ENCODE measurements at regions of chr3 and their contacts with region 1.

Region 1: GRCh38 chr3:50321336-50322114 is 1.0 kb downstream of the HYAL2 start:
- DNase-seq: peak; percentile 75 to 93
- H3K4me3 ChIP-seq: peak overlapping the region; percentile 89 to 96 (median 94)
- H3K27ac ChIP-seq: peak overlapping the region; percentile 100
- H3K4me1 ChIP-seq: peaks cover 0 to 35% (median 19%) of the 10 kb centered on the region in 4 experiments; a peak in 6 of 7 replicates
- H3K27me3 ChIP-seq: no peaks in the 10 kb centered on the region
- CTCF ChIP-seq: peak in 2 of 3 experiments; percentile 69 to 71; a peak in 3 of 4 replicates
- EP300 ChIP-seq: peak in 1 of 2 experiments; percentile 97; a peak in 2 of 3 replicates
- POLR2A ChIP-seq: peak in 1 of 2 experiments; percentile 97; a peak in 2 of 3 replicates
- RAD21 ChIP-seq: 0 out of 4 replicates have a peak, but pooled peaks of 1 of the 2 experiments have one; percentile 20

Region 2: DNA sequence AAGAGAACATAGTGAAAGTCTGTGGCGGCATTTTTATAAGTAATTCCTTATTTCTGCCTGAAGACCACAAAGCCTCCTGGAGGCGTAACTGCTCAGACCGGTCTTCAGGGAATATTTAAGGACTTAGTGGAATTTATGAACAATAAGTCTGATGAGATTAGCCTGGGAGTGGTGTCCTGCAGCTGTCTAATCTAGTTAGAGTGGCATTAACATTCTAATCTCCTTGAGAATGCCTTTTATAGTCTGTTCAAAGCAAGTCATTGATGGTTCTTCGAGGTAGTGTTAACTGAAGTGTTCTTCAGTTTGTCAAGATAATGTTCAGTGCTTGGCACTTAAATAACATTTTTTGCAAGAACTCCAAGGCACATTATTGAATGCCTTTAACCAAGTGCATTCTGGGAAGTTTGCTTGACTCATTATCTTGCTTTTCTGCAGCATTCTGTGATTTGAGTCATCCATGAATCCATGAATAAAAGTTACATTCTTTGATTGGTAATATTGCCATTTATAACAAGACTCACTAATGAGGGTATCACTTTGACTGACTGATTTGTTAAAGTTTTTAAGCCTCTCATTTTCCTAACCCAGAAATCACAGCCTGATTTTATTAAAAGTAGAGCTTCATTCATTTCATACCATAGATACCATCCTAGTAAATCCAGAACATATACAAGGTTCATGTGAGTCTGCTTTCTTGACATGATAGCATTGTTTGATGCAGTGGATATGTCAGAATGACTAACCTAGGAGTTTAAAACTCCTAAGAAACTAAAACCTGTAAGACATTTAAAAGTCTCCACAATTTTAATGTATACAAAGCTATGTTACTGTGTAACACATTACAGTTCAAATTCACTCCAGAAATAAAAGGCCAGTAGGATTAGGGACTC is 220.3 kb before region 1 on chr3:
- CTCF ChIA-PET with region 1: no interaction called
- POLR2A ChIA-PET with region 1: no interaction called
- DNase-seq: no peak
- H3K4me3 ChIP-seq: no peak overlapping the region
- H3K27ac ChIP-seq: no peak overlapping the region
- H3K4me1 ChIP-seq: no peaks in the 10 kb centered on the region
- H3K27me3 ChIP-seq: no peaks in the 10 kb centered on the region
- CTCF ChIP-seq: no peak
- EP300 ChIP-seq: no peak
- POLR2A ChIP-seq: no peak
- RAD21 ChIP-seq: no peak

Region 3: DNA sequence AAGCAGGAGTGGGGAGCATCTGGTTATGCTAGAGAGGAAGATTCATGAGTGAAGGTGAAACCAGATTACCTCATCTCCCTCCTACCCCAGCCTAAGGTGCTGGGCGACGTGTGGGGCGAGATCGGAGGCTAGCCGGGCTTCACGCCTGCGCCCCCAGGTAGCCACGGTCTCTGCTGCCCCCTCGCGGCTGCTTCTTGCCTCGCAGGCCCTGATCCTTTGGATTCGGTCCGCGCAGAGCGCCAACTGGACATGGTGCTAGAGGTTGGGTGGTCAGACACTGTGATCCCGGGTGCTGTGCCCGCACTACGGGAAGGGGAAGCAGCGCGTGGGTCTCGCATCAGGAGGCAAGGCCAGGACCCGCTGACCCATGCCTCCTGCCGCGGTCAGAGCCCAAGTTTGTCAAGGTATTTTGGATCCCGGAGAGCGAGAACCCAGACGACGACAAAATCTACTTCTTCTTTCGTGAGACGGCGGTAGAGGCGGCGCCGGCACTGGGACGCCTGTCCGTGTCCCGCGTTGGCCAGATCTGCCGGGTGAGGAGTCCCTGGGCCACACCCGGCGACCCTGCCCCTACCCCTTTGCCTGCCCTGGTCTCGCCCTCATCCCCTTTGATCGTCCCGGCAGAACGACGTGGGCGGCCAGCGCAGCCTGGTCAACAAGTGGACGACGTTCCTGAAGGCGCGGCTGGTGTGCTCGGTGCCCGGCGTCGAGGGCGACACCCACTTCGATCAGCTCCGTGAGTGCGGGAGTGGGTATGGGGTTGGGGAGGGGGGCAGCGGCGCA is 48.4 kb before region 1 on chr3:
- CTCF ChIA-PET with region 1: interaction called, 75 read pairs
- POLR2A ChIA-PET with region 1: interaction called, 16 read pairs
- DNase-seq: peak in 1 of 2 experiments; percentile 100
- H3K4me3 ChIP-seq: peak overlapping the region in 1 of 4 experiments; percentile 46; a peak in 1 of 8 replicates
- H3K27ac ChIP-seq: no peak overlapping the region
- H3K4me1 ChIP-seq: peaks cover 0 to 20% (median 19%) of the 10 kb centered on the region in 4 experiments; a peak in 6 of 7 replicates
- H3K27me3 ChIP-seq: peaks cover 27 to 50% (median 42%) of the 10 kb centered on the region in 4 experiments
- CTCF ChIP-seq: peak in 2 of 3 experiments; percentile 98 to 99; a peak in 3 of 4 replicates
- EP300 ChIP-seq: no peak
- POLR2A ChIP-seq: no peak
- RAD21 ChIP-seq: peak; percentile 99

Region 4: DNA sequence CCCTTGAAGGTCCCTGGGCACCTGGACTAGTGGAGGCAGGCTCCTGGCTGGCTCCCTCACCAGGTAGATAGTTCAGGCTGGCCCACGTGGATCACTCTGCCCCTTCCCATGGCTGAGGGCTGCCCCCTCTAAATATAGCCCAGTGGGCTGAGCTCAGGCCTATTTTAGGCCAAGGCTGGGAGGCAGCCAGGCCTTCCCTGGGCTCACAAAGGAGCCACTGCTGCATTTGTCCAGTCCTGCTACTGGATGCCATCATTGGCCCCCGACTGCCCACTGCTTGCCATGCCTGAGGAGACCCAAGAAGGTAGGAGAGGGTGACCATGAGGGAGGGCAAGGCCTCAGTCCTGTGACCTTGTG is 42.7 kb before region 1 on chr3 and contains the start of gene LSMEM2:
- CTCF ChIA-PET with region 1: interaction called, 75 read pairs
- POLR2A ChIA-PET with region 1: interaction called, 16 read pairs
- DNase-seq: no peak
- H3K4me3 ChIP-seq: no peak within 1 kb of the TSS
- H3K27ac ChIP-seq: no peak within 1 kb of the TSS
- H3K4me1 ChIP-seq: peaks cover 0 to 12% (median 7%) of the 10 kb centered on the region in 4 experiments; a peak in 5 of 7 replicates
- H3K27me3 ChIP-seq: peaks cover 20 to 41% (median 34%) of the 10 kb centered on the region in 4 experiments
- CTCF ChIP-seq: no peak
- EP300 ChIP-seq: no peak
- POLR2A ChIP-seq: no peak
- RAD21 ChIP-seq: no peak
- total RNA-seq, gene LSMEM2: 0.57 and 0.58 TPM in 2 replicates

Region 5: GRCh38 chr3:50292159-50293078 is 29.1 kb before region 1 on chr3 and contains the start of gene IFRD2:
- CTCF ChIA-PET with region 1: interaction called, 17 read pairs
- POLR2A ChIA-PET with region 1: interaction called, 149 read pairs
- DNase-seq: peak; percentile 91 to 94
- H3K4me3 ChIP-seq: peak within 1 kb of the TSS; percentile 62 to 95 (median 94)
- H3K27ac ChIP-seq: peak within 1 kb of the TSS; percentile 37; the same call in 1 of the 2 replicates
- H3K4me1 ChIP-seq: peaks cover 0 to 7% (median 5%) of the 10 kb centered on the region in 4 experiments; a peak in 4 of 7 replicates
- H3K27me3 ChIP-seq: no peaks in the 10 kb centered on the region; a peak in 1 of 7 replicates
- CTCF ChIP-seq: peak in 1 of 3 experiments; percentile 1; a peak in 1 of 4 replicates
- EP300 ChIP-seq: no peak
- POLR2A ChIP-seq: peak in 1 of 2 experiments; percentile 73; a peak in 2 of 3 replicates
- RAD21 ChIP-seq: no peak; a peak in 1 of 4 replicates
- total RNA-seq, gene IFRD2: 88.8 and 97.8 TPM in 2 replicates

Region 6: GRCh38 chr3:50298836-50299637 is 22.5 kb before region 1 on chr3 and contains the starts of genes HYAL3 and NAA80:
- CTCF ChIA-PET with region 1: interaction called, 24 read pairs
- POLR2A ChIA-PET with region 1: interaction called, 149 read pairs
- DNase-seq: peak; percentile 99
- H3K4me3 ChIP-seq: peak within 1 kb of the TSS; percentile 70 to 89 (median 80)
- H3K27ac ChIP-seq: peak within 1 kb of the TSS; percentile 61
- H3K4me1 ChIP-seq: peaks cover 0 to 26% (median 12%) of the 10 kb centered on the region in 4 experiments; a peak in 6 of 7 replicates
- H3K27me3 ChIP-seq: no peaks in the 10 kb centered on the region; a peak in 1 of 7 replicates
- CTCF ChIP-seq: peak in 1 of 3 experiments; percentile 8; a peak in 1 of 4 replicates
- EP300 ChIP-seq: no peak
- POLR2A ChIP-seq: peak in 1 of 2 experiments; percentile 66; a peak in 1 of 3 replicates
- RAD21 ChIP-seq: no peak
- total RNA-seq, gene HYAL3: 3.2 and 4.9 TPM in 2 replicates
- total RNA-seq, gene NAA80: 10.1 and 11.3 TPM in 2 replicates

Region 7: DNA sequence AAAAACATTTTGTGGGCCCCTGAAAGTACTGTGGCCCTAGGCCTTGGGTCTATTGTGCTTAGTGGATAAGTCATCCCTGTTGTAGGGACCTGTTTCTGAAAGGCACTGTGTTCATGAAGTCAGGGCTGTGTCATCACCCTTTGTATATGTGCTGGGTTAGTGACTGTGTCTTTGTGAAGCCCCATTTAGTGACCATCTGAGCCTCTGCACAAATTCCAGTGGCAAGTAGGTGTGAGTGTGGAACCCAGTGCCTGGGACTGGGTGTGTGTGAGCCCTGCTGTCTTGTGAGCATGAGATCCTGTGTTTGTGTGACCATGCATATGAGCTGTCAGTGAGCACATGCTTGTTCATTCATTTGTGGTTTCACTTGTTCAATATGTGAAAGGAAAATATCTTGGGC is 16.9 kb before region 1 on chr3:
- CTCF ChIA-PET with region 1: interaction called, 24 read pairs
- POLR2A ChIA-PET with region 1: interaction called, 149 read pairs
- DNase-seq: no peak
- H3K4me3 ChIP-seq: no peak overlapping the region
- H3K27ac ChIP-seq: no peak overlapping the region
- H3K4me1 ChIP-seq: peaks cover 0 to 20% (median 11%) of the 10 kb centered on the region in 4 experiments; a peak in 6 of 7 replicates
- H3K27me3 ChIP-seq: no peaks in the 10 kb centered on the region
- CTCF ChIP-seq: no peak
- EP300 ChIP-seq: no peak
- POLR2A ChIP-seq: no peak
- RAD21 ChIP-seq: no peak

Region 8: GRCh38 chr3:50337191-50337841 is 15.8 kb after region 1 on chr3:
- CTCF ChIA-PET with region 1: interaction called, 60 read pairs
- POLR2A ChIA-PET with region 1: interaction called, 40 read pairs
- DNase-seq: peak; percentile 96 to 99
- H3K4me3 ChIP-seq: peak overlapping the region; percentile 72 to 96 (median 88)
- H3K27ac ChIP-seq: peak overlapping the region; percentile 72; the same call in 1 of the 2 replicates
- H3K4me1 ChIP-seq: peaks cover 0 to 15% (median 14%) of the 10 kb centered on the region in 4 experiments; a peak in 5 of 7 replicates
- H3K27me3 ChIP-seq: peaks cover 20 to 44% (median 37%) of the 10 kb centered on the region in 4 experiments
- CTCF ChIP-seq: no peak
- EP300 ChIP-seq: no peak
- POLR2A ChIP-seq: peak in 1 of 2 experiments; percentile 54; a peak in 2 of 3 replicates
- RAD21 ChIP-seq: no peak

Measured in H1 (cell line).